H1 (cell line): ENCODE measurements at regions of chr12 and their contacts with region 1.

Region 1: GRCh38 chr12:52221912-52222457 is 11.1 kb upstream of the KRT7 start:
- DNase-seq: peak; percentile 44 to 96
- H3K4me3 ChIP-seq: no peak overlapping the region
- H3K27ac ChIP-seq: no peak overlapping the region
- H3K4me1 ChIP-seq: peaks cover 0 to 2% (median under 1%) of the 10 kb centered on the region in 4 experiments; a peak in 2 of 7 replicates
- H3K27me3 ChIP-seq: no peaks in the 10 kb centered on the region; a peak in 2 of 7 replicates
- CTCF ChIP-seq: peak; percentile 93 to 98 (median 95)
- EP300 ChIP-seq: no peak
- POLR2A ChIP-seq: no peak
- RAD21 ChIP-seq: peak; percentile 72 to 84

Region 2: GRCh38 chr12:52050761-52051541 is 171.0 kb before region 1 on chr12 and contains the start of gene NR4A1:
- CTCF ChIA-PET with region 1: no interaction called
- POLR2A ChIA-PET with region 1: no interaction called
- DNase-seq: peak in 1 of 2 experiments; percentile 87
- H3K4me3 ChIP-seq: peak within 1 kb of the TSS; percentile 44 to 72 (median 64)
- H3K27ac ChIP-seq: no peak within 1 kb of the TSS
- H3K4me1 ChIP-seq: peaks cover 0 to 19% (median 9%) of the 10 kb centered on the region in 4 experiments; a peak in 6 of 7 replicates
- H3K27me3 ChIP-seq: peaks cover 4 to 44% (median 36%) of the 10 kb centered on the region in 4 experiments
- CTCF ChIP-seq: no peak
- EP300 ChIP-seq: 0 out of 3 replicates have a peak, but pooled peaks of 1 of the 2 experiments have one; percentile 7
- POLR2A ChIP-seq: no peak; a peak in 1 of 3 replicates
- RAD21 ChIP-seq: no peak
- total RNA-seq, gene NR4A1: 18.7 and 19.3 TPM in 2 replicates

Region 3: DNA sequence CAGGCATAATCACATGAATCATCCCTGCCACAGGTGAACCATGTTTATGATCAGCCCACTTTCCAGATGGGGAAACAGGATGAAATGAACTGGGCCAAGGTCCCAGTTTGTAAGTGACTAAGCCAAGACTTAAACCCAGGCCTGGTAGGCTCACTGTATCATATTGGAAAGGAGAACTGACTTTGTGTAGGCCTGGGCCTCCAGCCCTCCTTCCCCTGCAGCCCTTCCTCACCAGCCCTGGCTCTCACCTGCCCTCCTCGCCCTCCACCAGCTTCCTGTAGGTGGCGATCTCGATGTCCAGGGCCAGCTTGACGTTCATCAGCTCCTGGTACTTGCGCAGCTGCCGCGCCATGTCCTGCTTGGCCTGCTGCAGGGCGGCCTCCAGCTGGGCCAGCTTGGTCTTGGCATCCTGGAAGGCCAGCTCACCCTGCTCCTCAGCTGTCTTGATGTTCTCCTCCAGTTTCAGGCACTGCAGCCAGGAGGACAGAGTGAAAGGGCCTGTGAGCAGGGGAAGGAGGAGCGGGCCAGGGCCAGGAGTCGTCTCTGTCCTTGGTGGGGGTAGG is 50.0 kb before region 1 on chr12:
- CTCF ChIA-PET with region 1: interaction called, 39 read pairs
- POLR2A ChIA-PET with region 1: no interaction called
- DNase-seq: peak in 1 of 2 experiments; percentile 80
- H3K4me3 ChIP-seq: no peak overlapping the region
- H3K27ac ChIP-seq: no peak overlapping the region
- H3K4me1 ChIP-seq: peaks cover 0 to 2% (median 0%) of the 10 kb centered on the region in 4 experiments; a peak in 2 of 7 replicates
- H3K27me3 ChIP-seq: no peaks in the 10 kb centered on the region
- CTCF ChIP-seq: peak; percentile 79 to 86 (median 81)
- EP300 ChIP-seq: no peak
- POLR2A ChIP-seq: no peak
- RAD21 ChIP-seq: peak; percentile 47 to 67; a peak in 3 of 4 replicates

Region 4: DNA sequence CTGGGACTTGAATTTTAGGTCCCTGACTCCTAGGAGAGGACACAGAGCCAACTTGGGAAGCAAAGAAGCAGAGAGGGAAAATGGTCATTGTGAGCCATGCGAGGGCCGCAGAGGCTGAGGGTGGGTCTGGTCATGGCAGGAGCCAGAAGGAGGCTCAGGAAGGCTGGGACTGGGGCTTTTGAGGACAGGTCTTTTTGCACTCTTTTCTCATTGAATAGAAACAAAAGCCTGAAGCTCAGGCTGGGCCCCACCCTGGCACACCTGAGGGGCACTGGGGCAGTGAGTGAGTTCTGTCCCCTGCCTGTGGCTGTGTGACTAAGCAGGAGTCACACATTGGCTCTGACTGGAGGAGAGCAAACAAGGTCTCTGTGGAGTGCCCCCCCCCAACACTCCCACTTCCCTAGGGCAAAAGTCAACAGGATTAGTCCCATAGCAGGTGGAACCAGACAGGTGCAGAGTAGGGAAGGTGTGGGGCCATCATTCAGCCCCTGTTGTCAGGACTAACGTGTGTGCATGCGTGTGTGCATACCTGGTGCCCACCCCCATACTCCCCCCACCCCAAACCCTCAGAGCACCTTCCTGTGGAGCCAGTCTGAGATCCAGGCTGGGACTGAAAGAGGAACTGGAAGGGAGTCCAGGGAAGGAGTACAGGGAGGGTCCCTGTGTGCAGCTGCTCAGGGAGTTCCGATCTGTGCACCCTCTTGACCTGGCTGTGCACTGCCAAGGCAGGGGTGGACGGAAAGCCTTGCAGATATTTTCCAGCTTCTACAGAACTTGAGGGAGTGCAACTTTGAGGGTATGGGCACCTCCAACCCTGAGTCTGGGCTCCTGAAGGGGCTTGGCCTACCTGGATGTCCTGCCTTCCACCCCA is 14.1 kb after region 1 on chr12:
- CTCF ChIA-PET with region 1: interaction called, 43 read pairs
- POLR2A ChIA-PET with region 1: interaction called, 4 read pairs
- DNase-seq: no peak
- H3K4me3 ChIP-seq: no peak overlapping the region
- H3K27ac ChIP-seq: no peak overlapping the region
- H3K4me1 ChIP-seq: peaks cover 14 to 40% (median 25%) of the 10 kb centered on the region in 4 experiments
- H3K27me3 ChIP-seq: peaks cover 0 to 43% (median 21%) of the 10 kb centered on the region in 4 experiments; a peak in 6 of 7 replicates
- CTCF ChIP-seq: no peak
- EP300 ChIP-seq: no peak
- POLR2A ChIP-seq: no peak
- RAD21 ChIP-seq: no peak

Region 5: DNA sequence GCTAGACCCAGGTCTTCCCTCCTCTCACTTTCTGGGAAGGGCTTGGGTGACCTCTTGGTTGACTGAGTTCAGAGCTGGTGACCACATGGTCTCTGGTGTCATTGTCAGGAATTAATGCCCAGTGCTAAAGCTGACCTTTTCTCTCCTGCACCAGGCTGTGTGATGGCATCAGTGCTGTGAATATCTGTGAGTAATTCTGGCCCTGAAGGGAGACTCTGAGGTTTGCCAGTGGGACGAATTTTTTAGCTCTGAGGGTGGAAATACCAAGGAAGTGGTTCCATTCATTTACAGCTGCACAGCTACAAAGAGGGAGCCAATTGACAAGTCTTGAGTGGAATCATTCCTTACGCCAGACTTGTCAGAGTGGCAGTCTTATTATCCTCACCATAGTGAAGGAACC is 46.2 kb after region 1 on chr12:
- CTCF ChIA-PET with region 1: interaction called, 13 read pairs
- POLR2A ChIA-PET with region 1: no interaction called
- DNase-seq: no peak
- H3K4me3 ChIP-seq: no peak overlapping the region
- H3K27ac ChIP-seq: no peak overlapping the region
- H3K4me1 ChIP-seq: no peaks in the 10 kb centered on the region
- H3K27me3 ChIP-seq: no peaks in the 10 kb centered on the region; a peak in 1 of 7 replicates
- CTCF ChIP-seq: no peak
- EP300 ChIP-seq: no peak
- POLR2A ChIP-seq: no peak
- RAD21 ChIP-seq: no peak

Region 6: GRCh38 chr12:52313926-52314325 is 91.9 kb after region 1 on chr12:
- CTCF ChIA-PET with region 1: interaction called, 63 read pairs
- POLR2A ChIA-PET with region 1: interaction called, 3 read pairs
- DNase-seq: no peak
- H3K4me3 ChIP-seq: no peak overlapping the region
- H3K27ac ChIP-seq: no peak overlapping the region
- H3K4me1 ChIP-seq: no peaks in the 10 kb centered on the region
- H3K27me3 ChIP-seq: peaks cover 5 to 19% (median 10%) of the 10 kb centered on the region in 4 experiments
- CTCF ChIP-seq: no peak
- EP300 ChIP-seq: no peak
- POLR2A ChIP-seq: no peak
- RAD21 ChIP-seq: no peak